ENCODE measurements at regions of chr5 and their contacts with region 1.

Region 1: DNA sequence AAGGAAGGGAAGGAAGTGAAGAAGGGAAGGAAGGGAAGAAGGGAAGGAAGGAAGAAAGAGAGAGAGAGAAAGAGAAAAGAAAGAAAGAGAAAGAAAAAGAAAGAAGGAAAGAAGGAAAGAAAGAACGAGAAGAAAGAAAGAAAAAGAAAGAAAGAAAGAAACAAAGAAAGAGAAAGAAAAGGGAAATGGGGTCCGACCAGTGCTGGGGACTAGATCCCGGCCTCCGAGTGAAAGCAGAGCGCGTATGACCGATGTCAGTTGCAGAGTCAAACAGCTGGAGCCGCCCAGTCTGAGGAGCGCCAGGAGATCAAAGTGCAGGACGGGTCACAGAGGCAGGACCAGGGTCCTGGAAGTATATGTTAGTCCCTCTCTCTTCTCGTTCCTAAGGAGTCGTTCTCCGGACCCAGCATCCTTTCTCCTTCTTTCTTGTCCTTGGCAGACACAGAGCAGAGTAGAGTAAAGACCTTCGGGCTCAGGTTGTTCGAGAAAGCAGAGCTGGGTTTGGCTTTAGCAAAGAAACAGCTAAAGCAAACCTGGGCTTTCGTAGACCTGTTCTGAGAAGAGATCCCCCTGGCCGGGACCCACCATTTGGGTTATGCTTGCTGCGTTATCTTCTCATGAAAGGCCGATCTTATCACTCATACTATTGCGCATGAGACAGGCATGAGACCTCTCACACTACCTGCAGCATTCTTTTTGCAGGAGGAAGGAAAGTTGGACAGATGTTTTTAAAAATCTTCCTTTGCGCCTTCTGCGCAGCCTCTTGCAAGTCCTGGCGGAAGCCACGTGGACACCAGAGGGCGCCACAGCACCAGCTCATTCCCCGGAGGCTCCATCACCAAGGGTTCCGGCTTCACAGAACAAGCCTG is 305.2 kb upstream of the MSX2 start:
- DNase-seq: peak; percentile 85 to 98 (median 95)

Region 2: DNA sequence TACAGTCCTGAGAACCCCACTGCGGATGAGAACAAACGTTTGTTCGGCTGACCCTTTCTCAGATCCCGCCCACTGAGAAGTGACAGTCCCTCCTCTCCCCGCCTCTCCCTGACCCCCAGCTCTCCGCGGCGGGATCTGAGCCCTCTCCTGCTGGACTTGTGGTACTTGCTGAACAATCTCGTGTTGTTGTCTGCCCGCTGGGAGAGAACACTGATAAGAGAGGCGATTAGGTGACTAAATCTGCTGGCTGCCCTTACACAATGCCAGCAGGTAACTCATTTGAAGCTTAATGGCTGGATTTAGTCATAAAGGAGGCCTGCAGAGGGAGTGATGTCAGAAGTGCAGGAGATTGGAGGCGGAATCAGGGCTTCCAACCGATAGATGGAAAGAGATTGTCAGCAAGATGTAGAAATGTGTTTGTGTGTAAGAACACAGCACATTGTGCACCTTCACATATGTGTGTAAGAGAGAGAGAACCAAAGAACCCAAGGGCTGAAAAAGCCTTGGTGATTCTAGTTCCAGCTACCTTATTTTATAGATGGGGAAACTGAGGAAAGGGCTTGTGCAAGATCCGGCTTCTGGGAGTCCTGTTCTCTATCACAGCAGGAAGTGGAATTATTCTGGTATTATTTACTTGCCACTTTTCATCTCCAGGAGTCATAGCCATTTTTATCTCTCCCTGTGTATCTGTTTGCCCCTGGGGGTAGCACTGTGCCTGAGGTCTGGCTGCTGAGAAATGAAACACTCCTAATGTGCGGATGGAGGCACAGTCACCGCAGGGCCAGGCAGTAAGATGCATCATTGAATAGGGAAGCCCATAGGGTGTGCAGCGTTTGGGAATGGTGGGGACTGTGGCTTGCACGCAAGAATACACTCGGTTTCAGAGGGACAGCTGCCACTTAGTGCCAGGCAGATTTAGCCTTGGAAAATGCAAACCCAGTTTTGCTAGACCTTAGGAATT is 101.5 kb after region 1 on chr5:
- intact Hi-C with region 1: no loop called
- DNase-seq: peak in 23 of 42 donors; percentile 20 to 70 (median 37)

Region 3: DNA sequence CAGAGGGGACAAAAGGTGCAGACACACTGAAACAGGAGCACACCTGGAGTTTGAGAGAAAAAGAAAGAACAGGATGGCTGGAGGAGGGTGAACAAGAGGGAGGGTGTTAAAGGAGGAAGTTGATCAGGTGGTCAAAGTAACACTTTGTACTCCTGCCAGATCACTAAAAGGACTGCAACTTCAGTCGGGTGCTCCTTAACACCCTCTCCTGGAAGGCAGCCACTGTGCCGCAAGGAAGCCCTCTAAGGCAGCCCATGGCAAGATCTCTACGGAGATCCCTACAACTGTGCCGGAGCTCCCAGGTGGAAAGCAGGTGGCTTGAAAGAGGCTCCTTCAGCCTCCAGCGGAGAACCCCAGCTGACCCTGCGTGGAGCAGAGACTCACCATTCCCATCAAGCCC is 180.8 kb after region 1 on chr5:
- intact Hi-C with region 1: no loop called
- DNase-seq: no peak

Region 4: GRCh38 chr5:174735498-174736330 is 316.6 kb after region 1 on chr5:
- intact Hi-C with region 1: loop called (anchors 5 kb)
- DNase-seq: peak in 13 of 42 donors; percentile 14 to 71 (median 39)

Region 5: GRCh38 chr5:174793684-174794328 is 374.6 kb after region 1 on chr5:
- intact Hi-C with region 1: loop called (anchors 1 kb)
- DNase-seq: peak; percentile 51 to 90 (median 79)

Region 6: DNA sequence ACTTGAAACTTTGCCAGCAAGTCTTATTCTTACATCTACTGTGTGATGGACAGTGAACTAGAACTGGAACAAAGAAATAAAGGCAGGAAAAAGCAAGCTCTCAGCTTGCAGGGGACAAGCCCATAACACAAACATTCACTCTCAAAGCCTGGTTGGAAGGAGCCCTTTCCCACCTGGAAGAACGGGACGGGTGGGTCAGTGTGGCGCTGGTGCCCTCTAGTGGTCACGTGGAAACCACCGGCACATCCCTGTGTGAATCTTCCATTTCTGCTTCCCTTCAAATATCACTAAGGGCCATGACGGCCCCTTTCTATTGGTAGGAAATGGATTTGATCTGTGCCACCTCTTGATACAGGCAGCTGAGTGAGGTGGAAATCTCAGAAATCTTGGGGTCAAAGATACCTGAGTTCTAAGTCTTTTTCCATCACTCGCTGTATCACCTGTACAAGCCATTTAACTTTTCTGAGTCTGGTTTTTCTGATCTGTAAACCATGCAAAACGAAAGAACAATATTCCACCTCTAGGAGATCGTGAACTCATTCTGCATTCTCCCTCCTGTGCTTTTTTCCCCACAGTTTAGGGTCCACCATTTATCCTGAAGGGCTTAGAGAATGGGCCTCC is 516.8 kb after region 1 on chr5:
- intact Hi-C with region 1: loop called (anchors 10 kb)
- DNase-seq: peak; percentile 44 to 90 (median 79)